H1 (cell line): ENCODE measurements at regions of chr4 and their contacts with region 1.

Region 1: DNA sequence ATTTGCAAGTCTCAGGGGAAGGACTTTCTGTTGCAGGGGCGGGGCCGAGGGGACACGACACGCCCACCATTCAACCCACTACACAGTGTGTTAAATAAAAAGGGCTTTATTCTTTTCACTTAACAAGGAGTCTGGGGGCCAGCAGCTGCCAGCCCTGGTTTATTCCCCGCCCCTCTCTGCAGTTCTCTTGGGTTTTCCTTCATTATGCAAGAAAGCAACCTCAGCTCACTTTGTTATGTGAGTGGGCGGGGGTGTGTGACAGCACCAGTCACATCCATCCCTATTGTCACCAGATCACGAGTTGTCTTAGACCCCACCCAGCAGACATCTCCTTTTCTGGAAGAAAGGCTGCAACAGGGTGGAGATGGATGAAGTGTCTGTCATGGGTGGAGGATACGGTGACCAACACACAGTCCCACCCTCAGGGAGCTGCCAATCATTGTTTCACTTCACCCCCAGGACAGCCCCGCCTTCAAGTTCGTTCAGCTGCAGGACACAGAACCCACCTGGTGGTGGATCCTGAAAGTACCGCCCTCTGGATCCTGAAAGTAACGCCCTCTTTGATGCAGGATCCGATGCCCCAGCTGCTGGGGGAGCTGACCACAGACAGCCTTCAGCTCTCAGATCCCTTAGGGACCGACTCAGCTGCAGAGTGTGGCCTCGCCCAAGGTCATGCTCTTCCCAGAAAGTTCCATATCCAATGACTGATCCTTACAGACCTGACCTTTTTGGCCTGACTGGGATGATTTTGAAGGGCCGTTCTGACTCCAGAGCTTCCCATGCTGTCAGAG is 79.6 kb downstream of the SMIM20 start:
- DNase-seq: peak; percentile 93 to 97
- H3K4me3 ChIP-seq: peak overlapping the region in 2 of 4 experiments; percentile 1 to 45; a peak in 3 of 8 replicates
- H3K27ac ChIP-seq: peak overlapping the region; percentile 46; the same call in 1 of the 2 replicates
- H3K4me1 ChIP-seq: peaks cover 0 to 5% (median 3%) of the 10 kb centered on the region in 4 experiments; a peak in 3 of 7 replicates
- H3K27me3 ChIP-seq: no peaks in the 10 kb centered on the region
- CTCF ChIP-seq: peak; percentile 70 to 83 (median 78)
- EP300 ChIP-seq: peak in 1 of 2 experiments; percentile 22; a peak in 1 of 3 replicates
- POLR2A ChIP-seq: peak in 1 of 2 experiments; percentile 10; a peak in 1 of 3 replicates
- RAD21 ChIP-seq: peak; percentile 61 to 70

Region 2: GRCh38 chr4:26005764-26006163 is 12.2 kb after region 1 on chr4:
- CTCF ChIA-PET with region 1: interaction called, 19 read pairs
- POLR2A ChIA-PET with region 1: interaction called, 3 read pairs
- DNase-seq: no peak
- H3K4me3 ChIP-seq: no peak overlapping the region
- H3K27ac ChIP-seq: no peak overlapping the region
- H3K4me1 ChIP-seq: no peaks in the 10 kb centered on the region
- H3K27me3 ChIP-seq: no peaks in the 10 kb centered on the region
- CTCF ChIP-seq: no peak
- EP300 ChIP-seq: no peak
- POLR2A ChIP-seq: no peak
- RAD21 ChIP-seq: no peak

Region 3: GRCh38 chr4:26061248-26061986 is 67.8 kb after region 1 on chr4:
- CTCF ChIA-PET with region 1: interaction called, 11 read pairs
- POLR2A ChIA-PET with region 1: interaction called, 3 read pairs
- DNase-seq: peak; percentile 25 to 53
- H3K4me3 ChIP-seq: no peak overlapping the region
- H3K27ac ChIP-seq: no peak overlapping the region
- H3K4me1 ChIP-seq: no peaks in the 10 kb centered on the region
- H3K27me3 ChIP-seq: no peaks in the 10 kb centered on the region
- CTCF ChIP-seq: peak; percentile 77 to 95 (median 81)
- EP300 ChIP-seq: no peak
- POLR2A ChIP-seq: no peak
- RAD21 ChIP-seq: peak; percentile 87 to 92

Region 4: GRCh38 chr4:26238778-26239679 is 245.4 kb after region 1 on chr4:
- CTCF ChIA-PET with region 1: no interaction called
- POLR2A ChIA-PET with region 1: no interaction called
- DNase-seq: no peak
- H3K4me3 ChIP-seq: peak overlapping the region in 1 of 4 experiments; percentile 7; a peak in 2 of 8 replicates
- H3K27ac ChIP-seq: no peak overlapping the region
- H3K4me1 ChIP-seq: peaks cover 0 to 12% (median 7%) of the 10 kb centered on the region in 4 experiments; a peak in 6 of 7 replicates
- H3K27me3 ChIP-seq: no peaks in the 10 kb centered on the region
- CTCF ChIP-seq: no peak
- EP300 ChIP-seq: no peak
- POLR2A ChIP-seq: no peak
- RAD21 ChIP-seq: no peak